Calu3 (cell line): ENCODE measurements at regions of chr3 and their contacts with region 1.

Region 1: DNA sequence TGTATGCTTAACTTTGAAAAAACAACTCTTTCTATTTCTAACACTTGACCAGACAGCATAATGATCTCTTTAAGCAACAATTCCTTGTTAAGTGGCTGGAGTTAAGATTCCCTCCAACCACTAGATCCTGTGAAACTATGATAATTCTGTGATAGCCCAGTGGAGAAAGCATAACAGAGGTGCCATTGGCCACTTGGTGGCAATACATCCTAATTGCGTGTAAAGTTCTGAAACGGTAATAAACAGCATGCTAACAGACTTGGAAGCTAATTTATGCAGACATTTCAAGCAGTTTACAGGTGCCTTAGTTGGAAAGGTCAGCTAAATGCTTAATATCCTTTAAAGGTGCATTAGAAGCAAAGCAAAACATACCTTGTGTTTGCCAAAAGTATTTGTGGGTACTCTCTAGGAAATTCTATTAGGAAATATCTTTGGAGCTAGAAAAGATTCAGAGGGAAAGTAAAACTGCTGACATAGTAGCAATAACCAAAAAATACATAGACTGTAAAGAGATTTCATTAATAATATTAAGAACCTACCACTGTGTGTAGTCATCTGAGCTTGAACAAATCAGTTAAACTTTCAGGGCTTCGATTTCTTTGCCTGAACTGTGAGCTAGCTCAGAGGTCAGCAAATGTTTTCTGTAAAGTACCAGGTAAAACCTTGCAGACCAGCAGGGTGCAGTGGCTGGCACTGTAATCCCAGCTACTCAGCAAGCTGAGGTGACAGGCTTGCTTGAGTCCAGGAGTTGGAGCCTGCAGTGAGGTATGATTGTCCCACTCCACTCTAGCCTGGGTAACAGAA is 19.0 kb upstream of the CSTA start:
- DNase-seq: peak; percentile 52
- H3K4me3 Mint-ChIP-seq: no peak overlapping the region
- H3K27ac Mint-ChIP-seq: no peak overlapping the region
- H3K4me1 Mint-ChIP-seq: peaks cover 8% of the 10 kb centered on the region
- H3K27me3 Mint-ChIP-seq: no peaks in the 10 kb centered on the region
- CTCF ChIP-seq: peak; percentile 9

Region 2: DNA sequence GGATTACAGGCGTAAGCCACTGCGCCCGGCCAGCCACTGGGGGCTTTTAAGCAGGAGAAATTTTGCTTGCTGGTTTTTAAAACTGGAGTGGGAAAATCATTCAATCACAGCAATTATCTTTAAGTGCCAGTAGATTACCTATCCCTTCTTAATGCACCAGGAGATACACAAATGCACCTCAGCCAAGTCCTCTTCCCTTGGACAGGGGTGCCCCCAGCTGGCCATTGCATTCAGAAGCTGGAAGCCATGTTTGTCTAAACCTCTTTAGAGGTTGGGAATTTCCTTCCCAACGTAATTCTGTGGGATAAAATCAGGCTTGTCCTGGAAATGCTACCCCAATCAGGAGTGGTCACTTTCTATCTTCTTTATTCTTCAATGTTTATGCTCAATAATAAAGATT is 50.4 kb after region 1 on chr3:
- CTCF ChIA-PET with region 1: interaction called, 21 read pairs
- intact Hi-C with region 1: loop called (anchors 1 kb)
- DNase-seq: peak; percentile 66
- H3K4me3 Mint-ChIP-seq: no peak overlapping the region
- H3K27ac Mint-ChIP-seq: no peak overlapping the region
- H3K4me1 Mint-ChIP-seq: no peaks in the 10 kb centered on the region
- H3K27me3 Mint-ChIP-seq: no peaks in the 10 kb centered on the region
- CTCF ChIP-seq: peak; percentile 27

Region 3: DNA sequence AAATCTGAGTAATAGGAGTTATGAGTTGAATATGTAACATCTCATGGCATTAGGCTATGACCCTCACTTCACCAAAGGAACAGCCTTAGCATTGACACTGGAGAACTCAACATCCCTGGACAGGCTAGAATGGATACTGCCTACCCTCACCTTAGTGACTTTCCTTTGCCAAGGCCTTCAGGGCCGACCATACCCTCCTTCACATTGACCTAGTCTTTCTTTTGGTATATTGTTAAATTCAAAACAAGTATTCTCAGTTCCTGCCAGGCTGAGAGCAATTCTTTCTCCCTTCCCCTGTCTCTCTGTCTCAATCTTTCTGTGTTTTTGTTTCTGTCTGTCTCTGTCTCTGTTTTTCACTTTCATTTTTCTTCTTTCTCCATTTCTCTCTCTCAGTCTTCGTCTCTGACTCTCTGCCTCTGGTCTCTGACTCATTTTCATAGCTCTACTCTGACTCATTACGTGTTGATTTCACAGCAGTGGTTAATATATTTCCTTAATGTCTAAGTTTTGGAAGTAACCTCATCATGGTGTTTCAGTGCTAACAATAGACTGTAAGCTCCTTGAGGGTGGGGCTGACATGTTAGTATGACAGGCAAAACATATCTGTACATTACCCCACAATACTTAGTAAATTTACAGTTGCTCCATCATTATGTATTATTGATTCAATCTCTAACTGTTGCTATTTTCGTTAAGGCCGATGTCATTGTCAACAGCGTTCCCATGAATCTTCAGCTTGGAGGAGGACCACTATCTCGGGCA is 304.0 kb after region 1 on chr3:
- CTCF ChIA-PET with region 1: no interaction called
- intact Hi-C with region 1: no loop called
- DNase-seq: peak; percentile 13
- H3K4me3 Mint-ChIP-seq: peak overlapping the region; percentile 31
- H3K27ac Mint-ChIP-seq: peak overlapping the region; percentile 77
- H3K4me1 Mint-ChIP-seq: peaks cover 18% of the 10 kb centered on the region
- H3K27me3 Mint-ChIP-seq: no peaks in the 10 kb centered on the region
- CTCF ChIP-seq: no peak

Region 4: DNA sequence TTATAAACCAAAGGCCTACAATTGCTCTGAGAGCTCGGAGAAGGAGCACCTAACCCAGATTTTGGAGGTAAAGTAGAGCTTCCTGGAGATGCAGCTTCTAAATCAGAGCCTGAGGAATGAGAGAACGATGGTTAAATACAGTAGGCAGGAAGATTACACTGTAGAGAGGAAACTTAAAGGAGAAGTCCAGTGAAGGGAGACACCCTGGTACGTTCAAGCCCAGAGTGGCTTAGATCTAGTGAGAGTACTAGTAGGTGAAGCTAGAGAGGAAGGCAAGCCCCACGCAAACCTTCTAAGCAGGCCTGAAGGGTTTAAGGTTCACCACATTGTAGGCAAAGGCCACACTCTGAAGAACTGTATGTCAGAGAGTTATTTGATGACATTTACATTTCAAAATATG is 522.3 kb after region 1 on chr3:
- CTCF ChIA-PET with region 1: no interaction called
- intact Hi-C with region 1: no loop called
- DNase-seq: no peak
- H3K4me3 Mint-ChIP-seq: no peak overlapping the region
- H3K27ac Mint-ChIP-seq: no peak overlapping the region
- H3K4me1 Mint-ChIP-seq: no peaks in the 10 kb centered on the region
- H3K27me3 Mint-ChIP-seq: no peaks in the 10 kb centered on the region
- CTCF ChIP-seq: no peak